AG04450 (cell line): ENCODE measurements at regions of chr2 and their contacts with region 1.

Region 1: DNA sequence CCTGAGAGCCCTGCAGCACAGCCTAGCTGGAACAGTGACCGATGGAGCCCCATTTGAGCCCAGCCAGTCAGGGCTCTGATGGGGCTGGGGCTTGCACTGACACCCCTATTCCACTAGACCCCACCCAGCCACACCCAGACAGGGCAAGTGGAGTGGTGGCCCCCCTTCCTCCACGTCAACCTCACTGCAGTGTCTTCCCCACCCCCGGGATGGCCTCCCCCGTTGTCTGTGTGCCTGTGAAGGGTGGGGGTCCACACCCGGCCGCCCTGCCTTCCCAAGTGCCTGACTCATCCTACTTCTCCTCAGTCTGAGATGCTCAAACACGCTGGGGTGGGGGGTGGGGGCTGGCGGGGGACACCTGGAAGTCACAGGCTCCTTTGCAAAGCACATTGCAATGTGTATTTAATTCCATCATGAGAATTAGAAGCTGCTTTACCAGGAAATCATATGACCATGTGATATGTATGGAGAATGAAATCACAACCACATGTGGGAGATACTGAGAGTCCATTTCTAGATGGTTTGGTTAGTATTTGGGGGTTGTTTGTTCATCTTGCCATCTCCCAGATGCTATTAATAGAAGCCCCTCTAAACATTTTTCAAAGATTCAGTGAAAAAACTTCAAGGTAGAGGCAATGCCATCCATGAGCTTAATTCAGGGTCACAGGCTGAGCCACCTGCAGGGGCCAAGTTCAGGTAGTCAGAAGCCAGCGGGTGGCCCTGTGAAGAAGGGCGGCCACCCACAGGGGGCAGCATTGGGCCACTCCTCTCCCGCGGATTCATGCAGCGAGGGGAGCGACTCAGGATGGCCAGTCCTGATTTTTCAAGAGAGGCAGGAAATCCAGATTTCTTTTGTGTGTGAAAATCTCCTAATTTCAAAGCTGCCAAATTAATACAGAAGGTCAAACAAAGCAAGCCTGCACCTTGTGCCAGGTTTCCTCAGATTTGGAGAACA is 22.7 kb upstream of the GMPPA start:
- DNase-seq: no peak
- H3K4me3 ChIP-seq: no peak overlapping the region
- H3K27ac ChIP-seq: peak overlapping the region; percentile 73
- H3K27me3 ChIP-seq: no peaks in the 10 kb centered on the region
- CTCF ChIP-seq: peak; percentile 93

Region 2: GRCh38 chr2:219452838-219453317 is 23.1 kb before region 1 on chr2:
- CTCF ChIA-PET with region 1: interaction called, 29 read pairs
- POLR2A ChIA-PET with region 1: interaction called, 5 read pairs
- DNase-seq: peak; percentile 85
- H3K4me3 ChIP-seq: no peak overlapping the region
- H3K27ac ChIP-seq: peak overlapping the region; percentile 99
- H3K27me3 ChIP-seq: no peaks in the 10 kb centered on the region
- CTCF ChIP-seq: no peak

Region 3: GRCh38 chr2:219490186-219490585 is 14.2 kb after region 1 on chr2:
- CTCF ChIA-PET with region 1: interaction called, 52 read pairs
- POLR2A ChIA-PET with region 1: interaction called, 3 read pairs
- DNase-seq: no peak
- H3K4me3 ChIP-seq: no peak overlapping the region
- H3K27ac ChIP-seq: no peak overlapping the region
- H3K27me3 ChIP-seq: no peaks in the 10 kb centered on the region
- CTCF ChIP-seq: no peak; the same call in 1 of the 2 replicates

Region 4: GRCh38 chr2:219509780-219510511 is 34.0 kb after region 1 on chr2:
- CTCF ChIA-PET with region 1: interaction called, 16 read pairs
- POLR2A ChIA-PET with region 1: no interaction called
- DNase-seq: no peak
- H3K4me3 ChIP-seq: peak overlapping the region; percentile 37
- H3K27ac ChIP-seq: no peak overlapping the region
- H3K27me3 ChIP-seq: peaks cover 46% of the 10 kb centered on the region
- CTCF ChIP-seq: peak; percentile 79

Region 5: DNA sequence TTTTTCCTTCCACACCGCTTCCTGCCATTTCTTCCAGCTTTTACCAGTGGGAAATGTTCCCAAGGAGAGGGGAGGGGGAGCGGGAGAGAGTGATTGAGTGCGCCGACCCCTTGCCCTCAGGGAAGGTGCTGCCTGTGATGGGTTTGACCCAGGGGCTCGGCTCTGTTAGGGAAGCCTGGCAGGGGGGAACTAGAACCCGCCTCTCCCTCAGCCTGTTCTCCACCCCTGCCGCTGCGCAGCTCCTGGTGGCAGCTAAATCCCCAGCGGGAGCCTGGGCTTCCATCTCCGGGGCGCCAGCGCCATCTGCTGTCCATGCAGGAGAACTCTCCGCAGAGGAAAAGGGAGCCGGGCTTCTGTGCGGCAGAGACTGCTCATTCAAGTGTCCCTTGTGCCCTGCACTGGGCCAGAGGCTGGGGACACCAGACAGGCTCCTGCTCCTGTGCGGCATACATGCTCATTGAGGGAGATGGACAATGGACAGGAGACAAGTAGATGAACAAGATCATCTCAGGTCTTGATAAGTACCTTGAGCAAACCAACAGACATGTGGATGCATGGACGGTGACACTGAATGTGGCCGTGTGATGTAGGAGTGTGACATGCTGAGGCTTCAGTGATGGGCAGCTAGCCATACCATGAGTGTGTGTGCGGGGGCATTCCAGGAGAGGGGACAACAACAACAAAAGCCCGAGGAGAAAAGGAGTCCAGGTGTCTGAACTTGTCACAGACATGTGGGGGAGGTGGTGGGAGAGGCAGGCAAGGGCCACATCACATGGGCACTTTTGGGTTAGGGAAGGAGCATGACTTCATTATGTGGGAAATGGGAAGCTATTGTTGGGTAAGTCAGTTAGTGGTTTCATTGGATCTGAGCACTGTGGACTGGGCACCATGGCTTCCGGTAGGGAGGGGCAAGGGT is 54.3 kb after region 1 on chr2:
- CTCF ChIA-PET with region 1: interaction called, 69 read pairs
- POLR2A ChIA-PET with region 1: no interaction called
- DNase-seq: peak; percentile 59
- H3K4me3 ChIP-seq: peak overlapping the region; percentile 41
- H3K27ac ChIP-seq: no peak overlapping the region
- H3K27me3 ChIP-seq: peaks cover 45% of the 10 kb centered on the region
- CTCF ChIP-seq: peak; percentile 98